ENCODE measurements at regions of chr6 and their contacts with region 1.

Region 1: GRCh38 chr6:63487138-63487813 is 85.0 kb upstream of the LOC128125822 start:
- DNase-seq: no peak
- H3K4me3 ChIP-seq: no peak overlapping the region
- H3K27ac ChIP-seq: no peak overlapping the region
- H3K4me1 ChIP-seq: no peaks in the 10 kb centered on the region
- H3K27me3 ChIP-seq: no peaks in the 10 kb centered on the region
- CTCF ChIP-seq: no peak
- POLR2A ChIP-seq: no peak

Region 2: GRCh38 chr6:63418741-63419140 is 68.5 kb before region 1 on chr6:
- intact Hi-C with region 1: no loop called
- DNase-seq: no peak
- H3K4me3 ChIP-seq: no peak overlapping the region
- H3K27ac ChIP-seq: no peak overlapping the region
- H3K4me1 ChIP-seq: no peaks in the 10 kb centered on the region
- H3K27me3 ChIP-seq: no peaks in the 10 kb centered on the region
- CTCF ChIP-seq: no peak
- POLR2A ChIP-seq: no peak

Region 3: GRCh38 chr6:63503199-63503598 is 15.9 kb after region 1 on chr6:
- intact Hi-C with region 1: loop called (anchors 1 kb)
- DNase-seq: no peak
- H3K4me3 ChIP-seq: no peak overlapping the region
- H3K27ac ChIP-seq: no peak overlapping the region
- H3K4me1 ChIP-seq: no peaks in the 10 kb centered on the region
- H3K27me3 ChIP-seq: no peaks in the 10 kb centered on the region
- CTCF ChIP-seq: no peak
- POLR2A ChIP-seq: no peak

Region 4: GRCh38 chr6:63546236-63546635 is 59.0 kb after region 1 on chr6:
- intact Hi-C with region 1: loop called (anchors 2 kb)
- DNase-seq: no peak
- H3K4me3 ChIP-seq: no peak overlapping the region
- H3K27ac ChIP-seq: no peak overlapping the region
- H3K4me1 ChIP-seq: no peaks in the 10 kb centered on the region
- H3K27me3 ChIP-seq: no peaks in the 10 kb centered on the region
- CTCF ChIP-seq: no peak
- POLR2A ChIP-seq: no peak

Region 5: DNA sequence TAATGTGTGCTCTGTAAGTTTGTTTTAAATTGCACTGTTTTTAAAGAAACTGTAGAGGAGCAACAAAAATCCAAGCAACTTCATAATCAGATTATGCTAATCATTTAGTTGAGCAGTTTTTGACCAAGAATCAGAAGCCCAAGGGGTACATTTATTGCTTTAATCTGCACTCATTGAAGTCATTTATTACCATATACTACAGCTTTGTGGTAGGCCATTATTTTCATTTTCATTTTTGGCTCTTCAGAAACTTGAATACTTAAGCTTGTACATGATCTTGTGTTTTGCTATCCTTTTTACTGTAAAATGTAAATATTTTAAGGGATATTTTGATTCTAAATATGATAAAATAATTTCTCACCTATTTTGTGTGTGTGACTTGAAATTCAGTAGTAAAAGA is 226.8 kb after region 1 on chr6:
- intact Hi-C with region 1: no loop called
- DNase-seq: no peak
- H3K4me3 ChIP-seq: no peak overlapping the region
- H3K27ac ChIP-seq: no peak overlapping the region
- H3K4me1 ChIP-seq: no peaks in the 10 kb centered on the region
- H3K27me3 ChIP-seq: no peaks in the 10 kb centered on the region
- CTCF ChIP-seq: no peak
- POLR2A ChIP-seq: no peak

Region 6: DNA sequence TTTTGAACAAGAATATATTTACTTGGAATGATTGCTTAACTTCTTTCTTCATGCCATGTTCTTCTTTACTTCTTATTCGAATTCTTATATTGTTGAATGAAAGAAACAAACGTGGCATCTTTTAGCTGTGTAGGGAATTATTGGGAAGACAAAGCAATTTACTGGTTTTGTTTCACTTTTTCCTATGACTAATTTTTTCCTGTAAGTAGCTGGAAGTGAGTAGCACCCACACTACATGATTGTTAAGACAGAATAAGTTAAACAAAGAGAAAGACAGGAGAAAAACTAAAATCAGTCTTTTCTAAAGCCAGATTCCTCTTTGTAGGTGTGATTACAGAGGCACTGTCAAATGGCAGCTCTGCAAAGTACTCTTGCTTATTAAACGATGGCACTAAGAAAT is 1626.3 kb after region 1 on chr6:
- intact Hi-C with region 1: no loop called
- DNase-seq: no peak
- H3K4me3 ChIP-seq: no peak overlapping the region
- H3K27ac ChIP-seq: no peak overlapping the region
- H3K4me1 ChIP-seq: no peaks in the 10 kb centered on the region
- H3K27me3 ChIP-seq: no peaks in the 10 kb centered on the region
- CTCF ChIP-seq: no peak
- POLR2A ChIP-seq: no peak

Measured in breast epithelium (tissue), 4 donors.